Transverse colon (tissue), 4 donors: ENCODE measurements at regions of chr20 and their contacts with region 1.

Region 1: GRCh38 chr20:48657475-48658470 is 170.0 kb downstream of the PREX1 start:
- DNase-seq: peak; percentile 67
- H3K4me3 ChIP-seq: no peak overlapping the region
- H3K27ac ChIP-seq: no peak overlapping the region
- H3K4me1 ChIP-seq: no peaks in the 10 kb centered on the region
- H3K27me3 ChIP-seq: no peaks in the 10 kb centered on the region
- CTCF ChIP-seq: peak; percentile 91 to 96 (median 94)
- EP300 ChIP-seq: no peak
- POLR2A ChIP-seq: no peak

Region 2: GRCh38 chr20:48153135-48153922 is 504.4 kb before region 1 on chr20:
- in situ Hi-C with region 1: no loop called
- intact Hi-C with region 1: no loop called
- DNase-seq: no peak
- H3K4me3 ChIP-seq: no peak overlapping the region
- H3K27ac ChIP-seq: no peak overlapping the region
- H3K4me1 ChIP-seq: no peaks in the 10 kb centered on the region
- H3K27me3 ChIP-seq: no peaks in the 10 kb centered on the region
- CTCF ChIP-seq: no peak
- EP300 ChIP-seq: no peak
- POLR2A ChIP-seq: no peak

Region 3: DNA sequence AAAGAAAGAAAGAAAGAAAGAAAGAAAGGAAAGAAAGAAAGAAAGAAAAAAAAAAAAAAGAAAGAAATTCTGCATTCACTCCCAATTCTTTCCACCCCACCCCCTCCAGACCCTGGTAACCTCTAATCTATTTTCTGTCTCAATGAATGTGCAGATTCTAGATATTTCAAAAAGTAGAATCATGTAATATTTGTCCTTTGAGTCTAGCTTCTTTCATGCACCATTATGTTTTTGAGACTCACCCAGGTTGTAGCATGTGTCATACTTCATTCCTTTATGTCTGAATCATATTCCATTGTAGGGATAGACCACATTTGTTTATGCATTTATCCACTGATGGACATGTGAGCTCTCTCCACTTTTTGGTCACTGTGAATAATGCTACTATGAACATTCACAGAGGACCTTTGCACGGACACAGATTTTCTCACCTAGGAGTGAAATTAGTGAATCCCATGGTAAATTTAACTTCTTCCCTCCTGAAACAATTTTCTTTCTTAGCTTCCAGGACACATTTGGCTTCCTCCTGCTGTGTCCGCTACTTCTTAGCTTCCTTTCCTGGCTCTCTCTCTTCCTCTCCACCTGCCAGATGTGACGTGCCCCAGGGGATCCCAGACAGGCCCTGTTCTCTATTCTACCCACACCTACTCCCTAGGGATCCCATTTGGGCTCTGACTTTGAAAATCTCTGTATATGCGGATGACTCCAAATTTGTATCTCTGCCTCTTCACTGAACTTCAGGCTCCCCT is 239.6 kb after region 1 on chr20:
- in situ Hi-C with region 1: loop called in 2 of 4 experiments (anchors 5 to 10 kb)
- intact Hi-C with region 1: no loop called
- DNase-seq: no peak
- H3K4me3 ChIP-seq: no peak overlapping the region
- H3K27ac ChIP-seq: no peak overlapping the region
- H3K4me1 ChIP-seq: no peaks in the 10 kb centered on the region
- H3K27me3 ChIP-seq: no peaks in the 10 kb centered on the region
- CTCF ChIP-seq: no peak
- EP300 ChIP-seq: no peak
- POLR2A ChIP-seq: no peak

Region 4: GRCh38 chr20:48904365-48905296 is 246.9 kb after region 1 on chr20:
- in situ Hi-C with region 1: loop called (anchors 5 to 10 kb)
- intact Hi-C with region 1: loop called (anchors 2 kb)
- DNase-seq: peak; percentile 66
- H3K4me3 ChIP-seq: no peak overlapping the region
- H3K27ac ChIP-seq: no peak overlapping the region
- H3K4me1 ChIP-seq: peaks cover 0 to 8% (median 0%) of the 10 kb centered on the region in 4 donors
- H3K27me3 ChIP-seq: no peaks in the 10 kb centered on the region
- CTCF ChIP-seq: peak; percentile 80 to 89 (median 85)
- EP300 ChIP-seq: no peak
- POLR2A ChIP-seq: no peak